Endothelial cell of umbilical vein (primary cell): ENCODE measurements at regions of chrX and their contacts with region 1.

Region 1: DNA sequence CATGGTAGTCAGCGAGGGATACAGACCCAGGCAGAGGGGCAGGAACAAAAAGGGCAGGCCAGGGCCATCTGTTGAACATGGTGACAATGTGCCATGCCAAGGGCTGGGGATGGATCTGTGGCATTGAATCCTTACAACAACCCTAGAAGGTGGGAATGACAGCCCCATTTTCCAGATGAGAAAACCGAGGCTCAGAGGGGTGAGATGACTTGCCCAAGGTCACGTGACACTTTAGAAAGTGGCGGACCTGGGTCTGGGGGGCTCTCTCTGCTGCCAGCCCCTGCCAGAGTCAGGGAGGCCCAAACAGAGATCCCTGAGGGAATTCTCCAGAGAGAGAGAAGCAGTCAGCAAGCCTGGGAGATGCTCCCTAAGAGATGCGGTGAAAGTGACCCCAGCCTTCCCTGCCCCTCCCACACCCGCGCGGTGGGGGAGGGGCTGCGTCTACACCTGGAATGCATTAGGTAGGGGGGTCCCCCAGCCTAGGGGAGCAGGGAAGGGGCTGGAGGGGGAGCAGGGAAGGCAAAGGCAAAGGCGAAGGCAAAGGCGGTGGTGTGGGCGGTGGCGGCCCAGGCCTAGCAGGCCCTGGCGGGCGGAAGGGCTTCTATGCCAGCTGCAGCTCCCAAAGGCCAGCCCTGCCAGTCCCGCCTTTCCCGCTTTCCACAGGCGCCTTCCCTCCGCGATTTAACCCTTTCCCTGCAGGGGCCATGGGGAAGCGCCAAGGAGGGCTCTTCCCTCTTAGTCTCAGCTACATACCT is 13.0 kb downstream of the FGD1 start:
- DNase-seq: no peak
- H3K4me3 ChIP-seq: no peak overlapping the region
- H3K27ac ChIP-seq: peak overlapping the region; percentile 12
- H3K4me1 ChIP-seq: peaks cover 18% of the 10 kb centered on the region
- H3K27me3 ChIP-seq: no peaks in the 10 kb centered on the region
- CTCF ChIP-seq: no peak
- POLR2A ChIP-seq: no peak

Region 2: GRCh38 chrX:54237014-54237413 is 246.0 kb before region 1 on chrX:
- CTCF ChIA-PET with region 1: no interaction called
- POLR2A ChIA-PET with region 1: no interaction called
- dilution Hi-C with region 1: no loop called
- intact Hi-C with region 1: no loop called
- DNase-seq: no peak
- H3K4me3 ChIP-seq: no peak overlapping the region
- H3K27ac ChIP-seq: no peak overlapping the region
- H3K4me1 ChIP-seq: no peaks in the 10 kb centered on the region
- H3K27me3 ChIP-seq: no peaks in the 10 kb centered on the region
- CTCF ChIP-seq: no peak
- POLR2A ChIP-seq: no peak

Region 3: GRCh38 chrX:54495814-54496516 is 12.9 kb after region 1 on chrX and contains the start of gene FGD1:
- CTCF ChIA-PET with region 1: interaction called, 3 read pairs
- POLR2A ChIA-PET with region 1: no interaction called
- dilution Hi-C with region 1: no loop called
- intact Hi-C with region 1: loop called (anchors 1 kb)
- DNase-seq: peak; percentile 60
- H3K4me3 ChIP-seq: peak within 1 kb of the TSS; percentile 8 to 75 (median 52)
- H3K27ac ChIP-seq: peak within 1 kb of the TSS; percentile 11
- H3K4me1 ChIP-seq: peaks cover 23% of the 10 kb centered on the region
- H3K27me3 ChIP-seq: no peaks in the 10 kb centered on the region
- CTCF ChIP-seq: no peak
- POLR2A ChIP-seq: no peak
- total RNA-seq, gene FGD1: 18.0 and 19.6 TPM in 2 replicates

Region 4: GRCh38 chrX:54529552-54530357 is 46.7 kb after region 1 on chrX and contains the start of gene GNL3L:
- CTCF ChIA-PET with region 1: interaction called, 3 read pairs
- POLR2A ChIA-PET with region 1: no interaction called
- dilution Hi-C with region 1: no loop called
- intact Hi-C with region 1: loop called (anchors 1 kb)
- DNase-seq: peak; percentile 78
- H3K4me3 ChIP-seq: peak within 1 kb of the TSS; percentile 17 to 86 (median 69)
- H3K27ac ChIP-seq: peak within 1 kb of the TSS; percentile 73
- H3K4me1 ChIP-seq: peaks cover 10% of the 10 kb centered on the region
- H3K27me3 ChIP-seq: no peaks in the 10 kb centered on the region
- CTCF ChIP-seq: no peak
- POLR2A ChIP-seq: peak; percentile 79
- total RNA-seq, gene GNL3L: 46.0 and 48.0 TPM in 2 replicates